Endothelial cell of umbilical vein (primary cell): ENCODE measurements at regions of chr11 and their contacts with region 1.

Region 1: DNA sequence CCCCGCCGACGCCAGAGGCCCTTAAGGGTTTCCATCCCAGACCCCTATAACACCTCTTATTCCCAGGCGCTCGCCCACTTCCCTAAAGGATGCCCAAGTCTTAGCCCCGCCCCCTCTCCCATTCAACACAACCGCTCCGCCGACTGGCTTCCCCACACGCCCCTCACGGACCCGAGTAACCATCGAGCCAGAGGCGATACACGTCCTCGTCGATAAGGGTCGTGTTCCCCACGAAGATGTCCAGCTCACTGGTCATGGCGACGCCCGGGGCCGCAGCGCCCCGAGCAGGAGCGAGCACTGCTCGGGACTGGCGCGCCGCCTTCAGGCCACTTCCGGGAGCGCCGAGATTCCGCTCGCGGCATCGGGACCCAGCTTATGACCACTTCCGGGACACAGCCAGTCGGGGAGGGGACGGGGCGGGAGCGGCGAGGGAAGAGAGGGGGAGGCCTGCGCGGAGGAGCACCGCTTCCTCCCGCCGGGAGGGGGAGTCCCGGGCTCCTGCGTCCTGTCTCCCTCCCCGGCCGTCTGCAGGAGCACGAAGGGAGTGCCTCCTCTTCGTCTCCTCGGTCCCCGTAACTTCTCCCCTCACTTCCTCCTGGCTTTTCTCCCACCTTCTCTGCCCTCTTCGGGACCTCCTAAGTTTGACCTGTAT is at the start of gene FIBP:
- DNase-seq: peak; percentile 97
- H3K4me3 ChIP-seq: peak within 1 kb of the TSS; percentile 34 to 66 (median 64)
- H3K27ac ChIP-seq: peak within 1 kb of the TSS; percentile 99
- H3K4me1 ChIP-seq: peaks cover 43% of the 10 kb centered on the region
- H3K27me3 ChIP-seq: no peaks in the 10 kb centered on the region
- CTCF ChIP-seq: peak; percentile 80 to 91
- POLR2A ChIP-seq: peak; percentile 99
- total RNA-seq, gene FIBP: 88.5 and 105 TPM in 2 replicates

Region 2: DNA sequence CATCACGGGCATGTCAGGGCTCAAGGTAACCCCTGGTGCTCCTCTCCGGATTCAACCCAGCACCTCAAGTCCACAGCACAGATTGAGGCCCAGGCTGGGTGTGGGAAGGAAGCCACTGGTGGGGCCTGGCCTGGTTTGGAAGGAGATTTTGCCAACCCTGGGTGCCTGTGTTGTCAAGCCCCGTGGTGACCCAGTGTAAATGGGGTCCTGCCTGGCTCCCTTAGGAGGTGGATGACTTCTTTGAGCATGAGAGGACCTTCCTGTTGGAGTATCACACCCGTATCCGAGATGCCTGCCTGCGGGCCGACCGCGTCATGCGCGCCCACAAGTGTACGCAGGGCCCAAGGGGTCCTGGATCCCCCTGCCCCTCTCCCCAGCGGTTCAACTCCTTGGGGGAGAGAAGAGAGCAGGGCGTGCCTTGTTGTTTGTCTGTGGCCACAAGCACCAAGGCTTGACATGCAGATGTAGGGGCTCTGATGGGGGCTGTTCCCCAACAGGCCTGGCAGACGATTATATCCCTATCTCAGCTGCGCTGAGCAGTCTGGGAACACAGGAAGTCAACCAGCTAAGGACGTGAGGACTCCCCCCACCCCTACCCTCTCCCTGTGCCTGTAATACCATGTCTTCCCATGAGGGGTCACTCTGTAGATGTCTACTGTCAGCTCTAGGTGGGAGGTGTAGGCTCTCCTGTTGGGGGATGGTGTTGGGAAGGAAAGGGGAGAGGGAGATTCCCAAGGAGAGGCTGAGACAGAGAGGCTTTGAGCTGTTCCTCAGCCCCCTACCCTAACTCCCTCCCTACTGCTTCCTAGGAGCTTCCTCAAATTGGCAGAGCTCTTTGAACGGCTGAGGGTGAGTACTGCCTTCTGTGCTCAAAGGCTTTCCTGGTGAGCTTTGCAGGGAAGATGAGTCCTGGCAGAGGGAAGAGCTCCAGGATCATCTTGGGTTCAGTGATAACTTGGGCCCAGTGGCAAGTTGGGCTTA is 37.2 kb before region 1 on chr11:
- CTCF ChIA-PET with region 1: interaction called, 18 read pairs
- POLR2A ChIA-PET with region 1: interaction called, 3 read pairs
- dilution Hi-C with region 1: no loop called
- intact Hi-C with region 1: no loop called
- DNase-seq: no peak
- H3K4me3 ChIP-seq: no peak overlapping the region
- H3K27ac ChIP-seq: no peak overlapping the region
- H3K4me1 ChIP-seq: peaks cover 8% of the 10 kb centered on the region
- H3K27me3 ChIP-seq: no peaks in the 10 kb centered on the region
- CTCF ChIP-seq: peak; percentile 48 to 50
- POLR2A ChIP-seq: peak; percentile 58

Region 3: DNA sequence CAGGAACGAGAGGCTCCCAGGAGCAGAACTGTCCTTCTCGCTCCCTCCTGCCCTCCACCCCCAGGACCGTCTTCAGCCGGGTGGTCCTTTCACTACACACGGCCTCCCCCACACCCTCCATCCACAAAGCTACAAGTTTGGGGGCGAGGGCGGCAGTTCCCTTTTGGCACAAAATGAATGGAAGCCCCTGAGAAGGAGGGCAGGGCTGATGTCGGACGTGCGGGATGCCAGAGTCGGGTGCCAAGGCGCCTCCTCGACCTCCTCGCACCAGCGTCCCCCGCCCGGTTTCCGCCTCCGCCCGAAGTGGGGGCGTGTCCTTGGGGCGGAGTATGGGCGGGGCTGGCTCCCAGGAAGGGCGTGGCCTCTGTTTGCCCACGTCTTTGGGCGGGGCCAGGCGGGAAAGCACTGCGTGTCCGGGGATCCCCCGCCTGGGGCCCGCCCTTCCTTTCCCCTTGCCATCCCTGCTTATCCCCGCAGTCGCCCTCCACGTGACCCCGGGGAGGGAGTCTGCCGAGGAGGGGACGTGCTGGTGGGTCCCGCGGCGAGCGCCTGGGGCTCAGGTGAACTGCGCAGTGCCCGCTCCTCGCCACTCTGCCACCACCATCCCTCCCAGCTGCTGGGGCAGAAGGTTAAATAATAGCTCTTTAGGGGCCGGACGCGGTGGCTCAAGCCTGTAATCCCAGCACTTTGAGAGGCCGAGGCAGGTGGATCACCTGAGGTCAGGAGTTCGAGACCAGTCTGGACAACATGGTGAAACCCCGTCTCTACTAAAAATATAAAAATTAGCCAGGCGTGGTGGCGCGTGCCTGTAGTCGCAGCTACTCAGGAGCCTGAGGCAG is 14.8 kb before region 1 on chr11:
- CTCF ChIA-PET with region 1: interaction called, 31 read pairs
- POLR2A ChIA-PET with region 1: interaction called, 11 read pairs
- dilution Hi-C with region 1: no loop called
- intact Hi-C with region 1: loop called (anchors 2 kb)
- DNase-seq: peak; percentile 83
- H3K4me3 ChIP-seq: peak overlapping the region; percentile 42 to 47 (median 43)
- H3K27ac ChIP-seq: peak overlapping the region; percentile 30
- H3K4me1 ChIP-seq: peaks cover 17% of the 10 kb centered on the region
- H3K27me3 ChIP-seq: no peaks in the 10 kb centered on the region
- CTCF ChIP-seq: no peak
- POLR2A ChIP-seq: peak; percentile 76

Region 4: DNA sequence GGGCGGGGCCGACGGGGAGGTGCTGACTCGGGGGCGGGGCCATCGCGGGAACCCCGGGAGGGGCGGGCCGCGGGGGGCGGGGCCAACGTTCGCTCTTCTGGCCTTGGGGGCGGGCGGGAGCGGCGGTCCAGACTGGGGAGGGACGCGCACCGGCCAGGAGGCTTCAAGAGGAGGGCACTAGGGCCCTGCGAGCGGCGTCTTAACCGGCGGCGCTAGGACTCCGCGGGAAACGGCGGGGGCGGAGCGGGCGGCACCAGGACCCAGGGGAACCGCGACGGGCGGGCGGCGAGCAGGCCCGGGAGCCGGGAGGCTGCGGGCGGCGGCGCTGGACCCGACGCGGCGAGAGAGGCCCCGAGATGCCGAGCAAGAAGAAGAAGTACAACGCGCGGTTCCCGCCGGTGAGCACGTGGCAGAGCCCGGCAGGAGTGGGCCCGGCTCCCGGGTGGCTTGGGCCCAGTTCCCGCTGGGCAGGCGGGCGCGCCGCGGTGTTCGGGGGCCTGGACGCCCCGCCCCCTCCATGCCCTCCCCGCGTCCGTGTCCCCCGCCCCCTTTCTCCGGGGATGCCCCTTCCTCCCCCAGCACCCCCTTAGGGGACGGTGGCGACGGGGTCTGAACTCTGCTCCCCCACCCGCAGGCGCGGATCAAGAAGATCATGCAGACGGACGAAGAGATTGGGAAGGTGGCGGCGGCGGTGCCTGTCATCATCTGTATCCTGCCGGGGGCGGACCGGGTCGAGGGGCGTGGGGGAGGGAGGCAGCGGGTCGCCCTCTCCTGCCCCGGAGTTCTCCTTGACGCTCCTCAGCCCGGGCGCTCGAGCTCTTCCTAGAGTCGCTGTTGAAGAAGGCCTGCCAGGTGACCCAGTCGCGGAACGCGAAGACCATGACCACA is 31.1 kb after region 1 on chr11 and contains the start of gene DRAP1:
- CTCF ChIA-PET with region 1: interaction called, 73 read pairs
- POLR2A ChIA-PET with region 1: interaction called, 28 read pairs
- dilution Hi-C with region 1: no loop called
- intact Hi-C with region 1: loop called (anchors 1 kb)
- DNase-seq: peak; percentile 97
- H3K4me3 ChIP-seq: peak within 1 kb of the TSS; percentile 70 to 90 (median 71)
- H3K27ac ChIP-seq: peak within 1 kb of the TSS; percentile 92
- H3K4me1 ChIP-seq: peaks cover 49% of the 10 kb centered on the region
- H3K27me3 ChIP-seq: no peaks in the 10 kb centered on the region
- CTCF ChIP-seq: no peak
- POLR2A ChIP-seq: peak; percentile 23
- total RNA-seq, gene DRAP1: 114 and 118 TPM in 2 replicates

Region 5: GRCh38 chr11:65981972-65982823 is 93.9 kb after region 1 on chr11:
- CTCF ChIA-PET with region 1: interaction called, 33 read pairs
- POLR2A ChIA-PET with region 1: interaction called, 4 read pairs
- dilution Hi-C with region 1: no loop called
- intact Hi-C with region 1: no loop called
- DNase-seq: no peak
- H3K4me3 ChIP-seq: no peak overlapping the region
- H3K27ac ChIP-seq: no peak overlapping the region
- H3K4me1 ChIP-seq: no peaks in the 10 kb centered on the region
- H3K27me3 ChIP-seq: no peaks in the 10 kb centered on the region
- CTCF ChIP-seq: no peak
- POLR2A ChIP-seq: no peak